ENCODE measurements at regions of chr9 and their contacts with region 1.

Region 1: GRCh38 chr9:117782931-117783788 is 79.0 kb downstream of the TLR4 start:
- DNase-seq: peak; percentile 52 to 78
- ATAC-seq: peak; percentile 70 to 94 (median 93)
- H3K4me3 ChIP-seq: peak overlapping the region in 9 of 10 donors; percentile 11 to 58 (median 50)
- H3K27ac ChIP-seq: peak overlapping the region in 7 of 10 donors; percentile 25 to 87 (median 48)
- H3K4me1 ChIP-seq: peaks cover 0 to 42% (median 16%) of the 10 kb centered on the region in 9 donors
- H3K27me3 ChIP-seq: no peaks in the 10 kb centered on the region
- CTCF ChIP-seq: peak; percentile 58 to 94 (median 82)

Region 2: GRCh38 chr9:117644133-117644931 is 138.8 kb before region 1 on chr9:
- intact Hi-C with region 1: loop called in 7 of 10 experiments (anchors 2 to 10 kb)
- DNase-seq: peak; percentile 71 to 73
- ATAC-seq: peak; percentile 55 to 92 (median 82)
- H3K4me3 ChIP-seq: peak overlapping the region in 8 of 10 donors; percentile 15 to 48 (median 38)
- H3K27ac ChIP-seq: peak overlapping the region in 6 of 10 donors; percentile 37 to 80 (median 63)
- H3K4me1 ChIP-seq: peaks cover 0 to 25% (median 13%) of the 10 kb centered on the region in 9 donors
- H3K27me3 ChIP-seq: peaks cover 0 to 46% (median 17%) of the 10 kb centered on the region in 7 donors
- CTCF ChIP-seq: peak; percentile 92 to 99 (median 97)

Region 3: GRCh38 chr9:117763314-117763713 is 19.8 kb before region 1 on chr9:
- intact Hi-C with region 1: no loop called
- DNase-seq: no peak
- ATAC-seq: no peak
- H3K4me3 ChIP-seq: no peak overlapping the region
- H3K27ac ChIP-seq: no peak overlapping the region
- H3K4me1 ChIP-seq: no peaks in the 10 kb centered on the region
- H3K27me3 ChIP-seq: no peaks in the 10 kb centered on the region
- CTCF ChIP-seq: no peak

Region 4: GRCh38 chr9:118809160-118809625 is 1026.0 kb after region 1 on chr9:
- intact Hi-C with region 1: loop called in 1 of 10 experiments (anchors 10 kb)
- DNase-seq: no peak
- ATAC-seq: no peak
- H3K4me3 ChIP-seq: no peak overlapping the region
- H3K27ac ChIP-seq: no peak overlapping the region
- H3K4me1 ChIP-seq: no peaks in the 10 kb centered on the region
- H3K27me3 ChIP-seq: peaks cover 0 to 6% (median 0%) of the 10 kb centered on the region in 7 donors
- CTCF ChIP-seq: no peak

Measured in heart right ventricle (tissue), 16 donors.